RWPE1 (cell line): ENCODE measurements at regions of chr21 and their contacts with region 1.

Region 1: DNA sequence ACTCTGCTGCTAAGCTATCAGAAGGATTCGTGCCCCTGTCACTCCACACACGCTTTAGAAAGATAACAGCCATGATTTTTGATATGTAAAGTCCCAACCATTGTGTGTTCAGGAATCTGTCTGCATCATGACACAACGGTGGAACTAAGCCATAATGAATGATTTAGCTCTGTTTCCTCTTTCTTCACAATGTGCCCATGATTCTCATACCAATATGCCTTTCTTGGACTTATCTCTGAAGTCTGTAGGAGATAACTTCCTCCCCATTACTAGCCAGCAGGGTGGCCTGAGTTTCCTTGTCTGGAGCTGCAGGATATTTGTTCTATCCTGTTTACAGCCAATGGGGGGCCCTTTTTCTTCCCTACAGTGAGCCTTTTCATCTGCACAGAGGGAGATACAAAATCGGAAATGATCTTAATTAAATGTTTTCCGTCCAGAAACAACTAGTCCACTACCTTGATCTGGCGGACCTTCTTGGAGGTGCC is 511.7 kb downstream of the USP25 start:
- DNase-seq: no peak
- H3K27ac ChIP-seq: no peak overlapping the region
- CTCF ChIP-seq: no peak

Region 2: DNA sequence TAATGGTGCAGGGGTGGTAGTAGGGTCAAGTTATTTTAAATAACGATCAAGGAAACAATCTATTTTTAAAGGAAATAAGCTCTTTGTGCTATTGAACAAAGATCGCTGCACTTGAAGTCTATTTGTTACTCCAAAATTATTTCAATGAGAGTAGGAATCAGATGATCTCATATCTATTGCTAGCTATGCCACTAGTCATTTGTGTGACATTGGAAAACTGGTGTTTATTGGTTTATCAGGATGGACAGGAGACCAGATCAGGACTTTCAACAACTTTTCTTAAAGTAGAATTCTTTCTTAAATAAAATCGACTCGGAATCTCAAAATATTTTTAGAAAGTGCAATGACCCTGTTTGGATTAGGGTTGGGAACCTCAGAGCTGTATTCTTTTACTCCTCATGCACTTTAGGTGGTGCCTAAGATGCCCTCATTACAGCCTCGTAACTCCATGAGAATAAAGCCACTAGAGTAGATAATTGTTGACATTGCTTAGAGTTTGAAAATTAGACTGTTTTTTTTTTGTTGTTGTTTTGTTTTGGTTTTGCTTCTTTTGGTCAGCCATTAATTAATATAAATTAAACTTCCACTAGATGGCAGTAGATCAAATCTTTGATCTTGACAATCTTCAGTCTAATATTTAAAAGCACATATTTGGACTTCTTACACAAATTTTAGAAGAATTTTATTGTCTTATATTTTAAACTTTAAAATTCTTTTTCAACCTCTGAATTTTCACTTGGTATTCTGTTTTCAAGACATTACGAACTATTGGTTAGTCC is 159.3 kb before region 1 on chr21:
- CTCF ChIA-PET with region 1: interaction called, 11 read pairs
- POLR2A ChIA-PET with region 1: no interaction called
- DNase-seq: no peak
- H3K27ac ChIP-seq: no peak overlapping the region
- CTCF ChIP-seq: peak; percentile 56; the same call in 1 of the 2 replicates

Region 3: GRCh38 chr21:16419188-16419921 is 177.8 kb after region 1 on chr21:
- CTCF ChIA-PET with region 1: no interaction called
- POLR2A ChIA-PET with region 1: no interaction called
- DNase-seq: no peak
- H3K27ac ChIP-seq: no peak overlapping the region
- CTCF ChIP-seq: no peak